Tibial artery (tissue), 4 donors: ENCODE measurements at regions of chr17 and their contacts with region 1.

Region 1: DNA sequence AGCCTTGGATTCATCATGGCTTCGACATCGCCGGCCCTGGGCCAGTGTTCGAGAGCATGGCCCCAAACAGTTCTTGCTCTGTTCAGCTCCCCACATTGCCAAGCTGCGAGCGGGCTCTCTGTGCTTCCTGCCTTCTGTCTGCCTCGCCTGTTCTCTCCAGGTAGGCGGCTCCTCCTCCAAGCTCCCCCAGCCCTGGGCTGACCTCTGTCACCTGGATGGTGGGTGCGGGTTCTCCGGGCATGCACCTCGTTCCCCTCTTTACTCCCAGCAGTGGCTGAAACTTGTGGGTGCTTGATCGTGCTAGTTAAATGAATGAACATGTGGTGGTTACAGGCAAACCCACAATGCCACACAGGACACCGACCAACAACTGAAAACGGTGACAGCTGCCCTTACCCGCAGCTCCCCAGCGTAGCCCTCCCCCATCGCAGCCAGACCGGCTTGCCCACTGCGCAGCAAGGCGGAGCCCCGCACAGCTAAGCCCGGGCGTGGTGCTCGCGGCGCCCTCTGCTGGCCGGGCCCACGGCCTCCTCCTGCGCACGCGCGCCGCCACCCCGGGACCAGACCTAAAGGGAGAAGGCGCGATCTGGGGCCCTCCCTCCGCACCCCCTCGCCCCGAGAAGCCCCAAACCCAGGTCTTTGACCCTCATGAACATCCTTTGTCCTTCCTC is 23.0 kb upstream of the EIF1 start:
- DNase-seq: peak; percentile 78 to 93
- H3K4me3 ChIP-seq: peak overlapping the region; percentile 50 to 60
- H3K27ac ChIP-seq: peak overlapping the region; percentile 76 to 80
- H3K4me1 ChIP-seq: peaks cover 0 to 30% (median 19%) of the 10 kb centered on the region in 4 donors
- H3K27me3 ChIP-seq: no peaks in the 10 kb centered on the region
- CTCF ChIP-seq: peak; percentile 95 to 96

Region 2: DNA sequence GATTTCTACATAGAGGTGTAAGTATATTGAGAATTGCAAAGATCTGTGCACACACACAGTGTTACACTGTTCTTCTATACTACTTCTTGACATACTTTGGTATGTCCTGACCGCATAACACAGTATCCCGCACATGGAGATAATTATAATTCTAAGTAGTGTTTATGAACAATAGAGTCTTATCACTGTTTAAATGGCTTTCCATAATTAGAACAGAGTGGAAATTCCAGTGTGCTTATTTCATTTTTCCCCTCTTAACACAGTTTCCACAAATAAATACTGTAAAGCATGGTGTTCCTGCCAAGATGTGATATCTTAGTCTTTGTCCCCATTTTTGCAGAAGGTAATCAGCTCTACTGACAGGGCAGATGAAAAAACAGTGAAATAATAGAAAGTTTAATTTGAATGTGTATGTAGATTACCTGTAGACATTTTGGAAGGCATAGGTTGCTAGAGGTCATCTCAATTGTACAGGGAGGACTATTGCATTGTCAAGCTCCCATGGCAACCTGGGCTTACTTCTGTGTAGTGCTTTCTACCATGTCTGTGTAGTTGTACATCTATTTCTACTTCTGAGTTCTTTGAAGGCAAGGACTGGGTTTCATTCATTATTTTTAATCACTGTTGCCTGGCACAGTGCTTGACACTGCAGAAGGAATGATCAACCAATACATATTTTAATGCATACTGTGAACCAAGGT is 855.8 kb before region 1 on chr17:
- intact Hi-C with region 1: loop called (anchors 5 kb)
- DNase-seq: no peak
- H3K4me3 ChIP-seq: no peak overlapping the region
- H3K27ac ChIP-seq: no peak overlapping the region
- H3K4me1 ChIP-seq: peaks cover 0 to 7% (median 0%) of the 10 kb centered on the region in 4 donors
- H3K27me3 ChIP-seq: peaks cover 0 to 25% of the 10 kb centered on the region in 2 donors
- CTCF ChIP-seq: no peak

Region 3: GRCh38 chr17:41548844-41549595 is 116.7 kb before region 1 on chr17:
- intact Hi-C with region 1: loop called (anchors 5 kb)
- DNase-seq: peak; percentile 84 to 87
- H3K4me3 ChIP-seq: peak overlapping the region; percentile 4 to 23
- H3K27ac ChIP-seq: peak overlapping the region; percentile 61 to 62
- H3K4me1 ChIP-seq: peaks cover 0 to 28% (median 25%) of the 10 kb centered on the region in 4 donors
- H3K27me3 ChIP-seq: no peaks in the 10 kb centered on the region
- CTCF ChIP-seq: peak; percentile 84 to 90

Region 4: DNA sequence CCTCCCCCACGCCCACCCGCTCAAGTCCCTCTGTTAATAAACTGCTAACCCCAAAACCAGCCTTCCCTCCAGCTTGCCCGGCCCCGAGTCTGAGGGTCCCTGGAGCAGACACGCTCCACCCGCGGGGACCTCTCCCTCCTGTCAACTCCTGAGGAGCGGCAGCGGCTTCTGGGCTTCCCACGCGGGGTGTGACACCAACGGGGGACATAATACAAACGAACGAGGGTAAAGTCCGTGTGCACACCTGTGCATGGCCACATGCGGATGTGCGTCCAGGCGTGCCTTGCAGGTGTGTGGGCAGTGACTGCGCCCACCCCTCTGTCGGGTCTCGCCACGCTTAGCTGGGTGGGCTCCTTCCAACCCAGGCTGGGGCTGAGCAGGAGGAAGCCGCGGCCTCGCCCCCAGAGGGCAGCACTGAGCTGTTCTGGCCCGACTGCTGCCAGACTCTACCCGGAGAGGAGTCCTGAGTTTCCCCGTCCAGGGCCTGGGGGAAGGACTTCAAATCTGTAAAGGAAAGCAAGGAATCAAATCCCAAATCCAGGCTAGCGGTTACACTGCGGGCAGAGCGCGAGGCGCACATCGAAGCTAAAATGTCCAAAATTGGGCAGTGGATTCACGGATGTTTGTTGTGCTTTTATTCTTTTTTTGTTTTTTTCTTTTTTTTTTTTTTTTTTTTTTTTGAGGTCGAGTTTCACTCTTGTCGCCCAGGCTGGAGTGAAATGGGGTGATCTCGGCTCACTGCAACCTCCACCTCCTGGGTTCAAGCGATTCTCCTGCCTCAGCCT is 17.1 kb before region 1 on chr17:
- intact Hi-C with region 1: loop called (anchors 2 kb)
- DNase-seq: peak; percentile 79 to 91
- H3K4me3 ChIP-seq: peak overlapping the region; percentile 30 to 47
- H3K27ac ChIP-seq: peak overlapping the region; percentile 50 to 68
- H3K4me1 ChIP-seq: peaks cover 3 to 46% (median 26%) of the 10 kb centered on the region in 4 donors
- H3K27me3 ChIP-seq: no peaks in the 10 kb centered on the region
- CTCF ChIP-seq: peak; percentile 94